ENCODE measurements at regions of chr12 and their contacts with region 1.

Region 1: GRCh38 chr12:122356192-122356635 is 66.3 kb downstream of the CLIP1 start:
- DNase-seq: peak in 1 of 2 experiments; percentile 66
- H3K4me3 ChIP-seq: no peak overlapping the region
- H3K27ac ChIP-seq: no peak overlapping the region
- H3K4me1 ChIP-seq: no peaks in the 10 kb centered on the region
- H3K27me3 ChIP-seq: no peaks in the 10 kb centered on the region
- CTCF ChIP-seq: peak in 2 of 3 experiments; percentile 61 to 81; a peak in 3 of 4 replicates
- EP300 ChIP-seq: no peak
- POLR2A ChIP-seq: no peak
- RAD21 ChIP-seq: peak; percentile 54 to 64

Region 2: GRCh38 chr12:122306407-122306806 is 49.8 kb before region 1 on chr12:
- CTCF ChIA-PET with region 1: interaction called, 49 read pairs
- POLR2A ChIA-PET with region 1: no interaction called
- DNase-seq: peak; percentile 7 to 47
- H3K4me3 ChIP-seq: no peak overlapping the region
- H3K27ac ChIP-seq: no peak overlapping the region
- H3K4me1 ChIP-seq: no peaks in the 10 kb centered on the region; a peak in 1 of 7 replicates
- H3K27me3 ChIP-seq: no peaks in the 10 kb centered on the region
- CTCF ChIP-seq: peak; percentile 69 to 88 (median 82)
- EP300 ChIP-seq: no peak
- POLR2A ChIP-seq: no peak
- RAD21 ChIP-seq: peak; percentile 64 to 76

Region 3: DNA sequence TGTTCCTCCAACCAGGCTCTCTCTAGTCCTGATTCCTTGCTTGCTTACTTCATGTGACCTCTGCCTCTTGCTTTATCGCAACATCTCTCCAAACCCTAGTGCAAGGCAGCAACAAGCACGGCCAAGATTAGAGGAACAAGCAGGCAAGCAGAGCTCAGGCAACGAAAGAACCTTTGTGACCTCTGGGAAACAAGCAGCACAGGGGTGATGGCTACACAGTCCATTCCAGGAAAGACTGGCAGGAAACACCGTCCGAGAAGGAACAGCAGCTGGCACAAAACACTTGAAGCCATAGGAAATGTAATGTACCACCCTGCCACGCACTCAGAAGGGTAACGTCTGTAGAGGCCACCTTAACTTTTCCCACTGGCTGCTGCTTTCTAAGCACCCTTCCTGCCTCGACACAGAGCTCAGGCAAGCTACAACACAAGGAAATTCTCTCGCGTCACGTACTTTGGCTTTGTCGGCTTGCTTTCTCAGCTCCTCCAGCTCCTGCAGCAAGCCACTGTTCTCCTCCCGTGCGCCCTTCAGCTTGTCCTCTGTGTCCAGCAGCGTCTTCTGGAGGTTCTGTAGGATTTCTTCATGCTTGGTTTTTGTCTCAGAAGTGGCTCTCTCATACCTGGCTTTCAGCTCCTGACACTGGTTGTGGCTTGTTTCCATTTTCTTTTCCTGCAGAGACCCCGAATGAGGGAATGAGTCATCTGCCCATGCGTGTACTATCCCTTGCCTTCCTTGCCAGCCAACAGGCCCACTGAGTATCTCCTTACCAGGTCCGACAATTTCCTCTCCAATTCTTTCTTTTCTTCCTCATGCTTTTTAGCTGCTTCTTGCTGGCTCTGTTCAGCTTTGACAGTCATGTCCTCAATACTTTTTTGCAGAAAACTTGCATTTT is 28.5 kb before region 1 on chr12:
- CTCF ChIA-PET with region 1: interaction called, 10 read pairs
- POLR2A ChIA-PET with region 1: no interaction called
- DNase-seq: peak in 1 of 2 experiments; percentile 10
- H3K4me3 ChIP-seq: no peak overlapping the region
- H3K27ac ChIP-seq: no peak overlapping the region; the same call in 1 of the 2 replicates
- H3K4me1 ChIP-seq: peaks cover 0 to 2% (median 0%) of the 10 kb centered on the region in 4 experiments; a peak in 1 of 7 replicates
- H3K27me3 ChIP-seq: no peaks in the 10 kb centered on the region
- CTCF ChIP-seq: no peak
- EP300 ChIP-seq: no peak
- POLR2A ChIP-seq: no peak
- RAD21 ChIP-seq: no peak

Region 4: GRCh38 chr12:122345042-122345441 is 11.2 kb before region 1 on chr12:
- CTCF ChIA-PET with region 1: interaction called, 23 read pairs
- POLR2A ChIA-PET with region 1: no interaction called
- DNase-seq: no peak
- H3K4me3 ChIP-seq: no peak overlapping the region
- H3K27ac ChIP-seq: no peak overlapping the region
- H3K4me1 ChIP-seq: no peaks in the 10 kb centered on the region
- H3K27me3 ChIP-seq: no peaks in the 10 kb centered on the region
- CTCF ChIP-seq: no peak
- EP300 ChIP-seq: no peak
- POLR2A ChIP-seq: no peak
- RAD21 ChIP-seq: no peak